ENCODE measurements at regions of chr5 and their contacts with region 1.

Region 1: GRCh38 chr5:117561531-117561930 is 986.9 kb upstream of the SEMA6A start:
- DNase-seq: no peak
- ATAC-seq: no peak
- H3K4me3 ChIP-seq: no peak overlapping the region
- H3K27ac ChIP-seq: no peak overlapping the region
- H3K4me1 ChIP-seq: no peaks in the 10 kb centered on the region
- H3K27me3 ChIP-seq: no peaks in the 10 kb centered on the region
- CTCF ChIP-seq: no peak
- POLR2A ChIP-seq: no peak
- RAD21 ChIP-seq: no peak

Region 2: GRCh38 chr5:117497601-117498000 is 63.9 kb before region 1 on chr5:
- CTCF ChIA-PET with region 1: no interaction called
- POLR2A ChIA-PET with region 1: no interaction called
- RAD21 ChIA-PET with region 1: no interaction called
- intact Hi-C with region 1: loop called (anchors 5 kb)
- DNase-seq: no peak
- ATAC-seq: no peak
- H3K4me3 ChIP-seq: no peak overlapping the region
- H3K27ac ChIP-seq: no peak overlapping the region
- H3K4me1 ChIP-seq: no peaks in the 10 kb centered on the region
- H3K27me3 ChIP-seq: no peaks in the 10 kb centered on the region
- CTCF ChIP-seq: no peak
- POLR2A ChIP-seq: no peak
- RAD21 ChIP-seq: no peak